Activated naive CD4-positive, alpha-beta T cell treated with anti-CD3 and anti-CD28 coated beads, Interleukin-2, amount 10 ng/mL, durations not matched to agents 7 days and 5 days (primary cell): ENCODE measurements at regions of chr6 and their contacts with region 1.

Region 1: GRCh38 chr6:31366693-31367470 is 9.9 kb upstream of the HLA-B start:
- DNase-seq: peak; percentile 89
- H3K4me3 Mint-ChIP-seq: peak overlapping the region; percentile 53
- H3K27ac Mint-ChIP-seq: no peak overlapping the region
- H3K4me1 Mint-ChIP-seq: peaks cover 14% of the 10 kb centered on the region
- H3K27me3 Mint-ChIP-seq: peaks cover 48% of the 10 kb centered on the region

Region 2: GRCh38 chr6:31128093-31128676 is 238.7 kb before region 1 on chr6:
- CTCF ChIA-PET with region 1: interaction called, 10 read pairs
- DNase-seq: peak; percentile 85
- H3K4me3 Mint-ChIP-seq: no peak overlapping the region
- H3K27ac Mint-ChIP-seq: no peak overlapping the region
- H3K4me1 Mint-ChIP-seq: no peaks in the 10 kb centered on the region
- H3K27me3 Mint-ChIP-seq: peaks cover 46% of the 10 kb centered on the region

Region 3: DNA sequence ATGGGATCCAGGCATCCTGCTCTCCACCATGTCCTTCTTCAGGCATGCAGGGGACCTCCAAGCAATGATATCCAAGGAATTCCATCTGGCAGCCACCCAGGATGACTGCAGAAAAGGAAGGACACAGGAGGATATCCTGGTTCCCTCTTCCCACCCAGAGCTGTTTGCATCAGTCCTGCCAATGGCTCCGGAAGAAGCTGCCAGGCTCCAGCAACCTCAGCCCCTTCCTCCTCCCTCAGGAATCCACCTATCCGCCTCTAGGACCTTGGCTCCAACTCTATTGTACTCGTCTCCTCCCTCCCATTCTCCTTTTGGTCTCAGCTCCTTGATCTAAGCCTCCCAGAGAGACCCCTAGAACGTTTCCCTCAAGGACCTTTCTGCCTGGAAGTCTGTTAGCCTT is 227.3 kb before region 1 on chr6:
- CTCF ChIA-PET with region 1: interaction called, 11 read pairs
- DNase-seq: no peak
- H3K4me3 Mint-ChIP-seq: no peak overlapping the region
- H3K27ac Mint-ChIP-seq: no peak overlapping the region
- H3K4me1 Mint-ChIP-seq: peaks cover 4% of the 10 kb centered on the region
- H3K27me3 Mint-ChIP-seq: peaks cover 10% of the 10 kb centered on the region

Region 4: GRCh38 chr6:31158140-31158862 is 208.6 kb before region 1 on chr6 and contains the start of gene TCF19:
- CTCF ChIA-PET with region 1: interaction called, 10 read pairs
- DNase-seq: peak; percentile 100
- H3K4me3 Mint-ChIP-seq: peak within 1 kb of the TSS; percentile 95
- H3K27ac Mint-ChIP-seq: peak within 1 kb of the TSS; percentile 87
- H3K4me1 Mint-ChIP-seq: peaks cover 55% of the 10 kb centered on the region
- H3K27me3 Mint-ChIP-seq: no peaks in the 10 kb centered on the region

Region 5: GRCh38 chr6:31197559-31198305 is 169.2 kb before region 1 on chr6:
- CTCF ChIA-PET with region 1: interaction called, 65 read pairs
- DNase-seq: peak; percentile 98
- H3K4me3 Mint-ChIP-seq: peak overlapping the region; percentile 96
- H3K27ac Mint-ChIP-seq: peak overlapping the region; percentile 99
- H3K4me1 Mint-ChIP-seq: peaks cover 61% of the 10 kb centered on the region
- H3K27me3 Mint-ChIP-seq: no peaks in the 10 kb centered on the region

Region 6: GRCh38 chr6:31203345-31203979 is 163.4 kb before region 1 on chr6:
- CTCF ChIA-PET with region 1: interaction called, 65 read pairs
- DNase-seq: peak; percentile 54
- H3K4me3 Mint-ChIP-seq: peak overlapping the region; percentile 79
- H3K27ac Mint-ChIP-seq: peak overlapping the region; percentile 98
- H3K4me1 Mint-ChIP-seq: peaks cover 69% of the 10 kb centered on the region
- H3K27me3 Mint-ChIP-seq: no peaks in the 10 kb centered on the region

Region 7: DNA sequence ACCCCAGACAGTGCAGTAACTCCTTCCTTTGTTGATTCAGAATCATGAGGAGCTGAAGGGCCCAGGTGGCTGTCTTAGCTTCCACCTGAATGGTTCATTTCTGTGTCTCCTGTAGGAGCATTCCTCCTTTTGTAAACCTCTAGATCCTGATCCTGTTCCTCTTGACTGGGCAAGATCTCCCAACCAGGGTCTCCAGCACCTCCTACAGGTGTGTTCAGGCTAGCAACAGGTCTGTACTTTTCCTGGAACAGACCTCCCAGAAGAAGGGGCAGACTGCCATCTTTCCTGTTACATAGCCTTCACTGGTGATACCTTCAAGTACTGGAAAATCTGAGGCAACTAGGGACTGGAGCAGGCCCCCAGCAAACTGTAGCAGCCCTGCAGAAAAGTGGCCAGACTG is 45.1 kb before region 1 on chr6:
- CTCF ChIA-PET with region 1: no interaction called
- DNase-seq: peak; percentile 38
- H3K4me3 Mint-ChIP-seq: no peak overlapping the region
- H3K27ac Mint-ChIP-seq: no peak overlapping the region
- H3K4me1 Mint-ChIP-seq: no peaks in the 10 kb centered on the region
- H3K27me3 Mint-ChIP-seq: peaks cover 60% of the 10 kb centered on the region